H1 (cell line): ENCODE measurements at regions of chr6 and their contacts with region 1.

Region 1: GRCh38 chr6:152484806-152485205 is 152.4 kb downstream of the SYNE1 start:
- DNase-seq: no peak
- H3K4me3 ChIP-seq: no peak overlapping the region
- H3K27ac ChIP-seq: no peak overlapping the region
- H3K4me1 ChIP-seq: no peaks in the 10 kb centered on the region
- H3K27me3 ChIP-seq: no peaks in the 10 kb centered on the region
- CTCF ChIP-seq: no peak
- EP300 ChIP-seq: no peak
- POLR2A ChIP-seq: no peak
- RAD21 ChIP-seq: no peak

Region 2: DNA sequence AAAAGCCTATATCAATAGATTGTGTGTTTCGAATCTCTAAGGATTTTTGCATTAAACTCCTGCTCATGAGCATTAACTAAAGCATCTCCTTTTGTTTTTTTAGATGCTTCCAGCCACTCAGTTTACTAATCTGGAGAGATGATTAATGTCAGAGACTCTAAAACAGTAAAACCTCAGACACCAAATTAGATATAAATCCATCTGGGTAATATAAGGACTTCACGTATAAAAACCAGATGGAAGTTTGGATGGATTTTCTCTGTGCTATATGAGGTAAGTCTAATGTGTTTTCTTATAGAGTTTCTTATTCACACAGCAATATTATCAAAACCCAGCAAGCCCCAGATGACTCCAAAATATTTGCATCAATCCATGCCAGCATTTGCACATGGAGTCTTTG is 15.1 kb after region 1 on chr6:
- CTCF ChIA-PET with region 1: interaction called, 20 read pairs
- POLR2A ChIA-PET with region 1: no interaction called
- DNase-seq: no peak
- H3K4me3 ChIP-seq: no peak overlapping the region
- H3K27ac ChIP-seq: no peak overlapping the region
- H3K4me1 ChIP-seq: no peaks in the 10 kb centered on the region
- H3K27me3 ChIP-seq: no peaks in the 10 kb centered on the region
- CTCF ChIP-seq: no peak
- EP300 ChIP-seq: no peak
- POLR2A ChIP-seq: no peak
- RAD21 ChIP-seq: no peak

Region 3: GRCh38 chr6:152642989-152643388 is 158.2 kb after region 1 on chr6:
- CTCF ChIA-PET with region 1: interaction called, 14 read pairs
- POLR2A ChIA-PET with region 1: interaction called, 4 read pairs
- DNase-seq: peak; percentile 60 to 61
- H3K4me3 ChIP-seq: no peak overlapping the region
- H3K27ac ChIP-seq: no peak overlapping the region
- H3K4me1 ChIP-seq: no peaks in the 10 kb centered on the region
- H3K27me3 ChIP-seq: peaks cover 2 to 10% (median 6%) of the 10 kb centered on the region in 4 experiments; a peak in 6 of 7 replicates
- CTCF ChIP-seq: peak; percentile 84 to 93 (median 91)
- EP300 ChIP-seq: no peak
- POLR2A ChIP-seq: no peak
- RAD21 ChIP-seq: peak; percentile 89 to 90